ENCODE measurements at regions of chr3 and their contacts with region 1.

Region 1: DNA sequence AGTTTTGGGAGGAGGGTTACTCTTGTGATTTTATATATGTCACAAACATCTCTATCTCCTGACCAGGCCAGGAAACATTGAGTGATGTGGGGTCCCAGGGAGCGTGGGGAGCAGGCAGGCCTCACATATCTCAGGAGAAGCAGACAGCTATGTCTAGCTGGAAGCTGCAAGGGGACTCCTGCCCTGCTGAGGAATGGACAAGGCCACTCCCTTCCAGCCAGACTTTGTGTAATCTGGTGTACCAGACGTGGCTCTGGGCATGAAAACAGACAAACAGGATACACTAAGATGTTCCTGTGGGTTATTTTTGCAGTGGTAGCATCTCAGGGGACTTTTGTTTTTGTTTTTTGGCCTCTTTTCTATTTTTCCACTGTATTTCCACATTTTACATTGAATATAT is 23.2 kb downstream of the CYP8B1 start:
- DNase-seq: no peak
- H3K4me3 ChIP-seq: no peak overlapping the region
- H3K27me3 ChIP-seq: peaks cover 4% of the 10 kb centered on the region
- CTCF ChIP-seq: no peak

Region 2: GRCh38 chr3:42839616-42840015 is 12.8 kb before region 1 on chr3:
- CTCF ChIA-PET with region 1: interaction called, 12 read pairs
- POLR2A ChIA-PET with region 1: no interaction called
- DNase-seq: peak; percentile 9
- H3K4me3 ChIP-seq: no peak overlapping the region
- H3K27me3 ChIP-seq: 0 out of 2 replicates have a peak, but pooled peaks cover 2% of the 10 kb centered on the region
- CTCF ChIP-seq: peak; percentile 77

Region 3: GRCh38 chr3:42906070-42906847 is 53.8 kb after region 1 on chr3 and contains the start of gene ZNF662:
- CTCF ChIA-PET with region 1: no interaction called
- POLR2A ChIA-PET with region 1: no interaction called
- DNase-seq: no peak
- H3K4me3 ChIP-seq: peak within 1 kb of the TSS; percentile 47
- H3K27me3 ChIP-seq: peaks cover 1% of the 10 kb centered on the region; the same call in 1 of the 2 replicates
- CTCF ChIP-seq: no peak
- polyA plus RNA-seq, gene ZNF662: 1.2 and 2.1 TPM in 2 replicates

Measured in BJ (cell line).